ENCODE measurements at regions of chr14 and their contacts with region 1.

Region 1: GRCh38 chr14:70856851-70857495 is 47.7 kb upstream of the MAP3K9 start:
- DNase-seq: peak; percentile 92
- H3K4me3 ChIP-seq: no peak overlapping the region
- H3K27ac ChIP-seq: no peak overlapping the region
- H3K4me1 ChIP-seq: peaks cover 20% of the 10 kb centered on the region
- H3K27me3 ChIP-seq: no peaks in the 10 kb centered on the region
- CTCF ChIP-seq: no peak

Region 2: DNA sequence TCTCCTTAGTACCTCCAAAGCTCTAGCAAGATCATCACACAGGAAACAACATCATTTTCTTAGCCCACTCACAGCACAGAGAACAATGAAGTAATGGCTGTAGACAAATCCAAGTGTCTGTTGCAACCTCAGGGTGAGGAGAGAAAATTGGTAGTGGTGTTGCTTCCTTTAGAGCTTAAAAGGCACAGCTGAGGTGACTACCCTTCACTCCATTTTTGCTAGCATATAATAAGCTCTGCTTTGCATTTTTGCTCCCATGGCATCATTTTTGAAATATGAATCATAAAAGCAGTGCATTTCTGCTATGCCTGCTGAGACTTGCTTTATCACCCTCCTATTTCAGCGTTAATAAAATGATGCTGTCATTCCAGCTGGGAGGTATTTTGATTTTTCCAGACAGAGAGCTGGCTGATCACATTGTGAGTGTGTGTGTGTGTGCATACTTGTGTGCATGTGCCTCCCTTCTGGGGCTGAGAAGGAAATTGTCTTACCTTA is 31.8 kb after region 1 on chr14:
- CTCF ChIA-PET with region 1: no interaction called
- dilution Hi-C with region 1: no loop called
- in situ Hi-C with region 1: no loop called
- intact Hi-C with region 1: loop called (anchors 2 kb)
- DNase-seq: peak; percentile 89
- H3K4me3 ChIP-seq: no peak overlapping the region
- H3K27ac ChIP-seq: peak overlapping the region; percentile 38
- H3K4me1 ChIP-seq: peaks cover 43% of the 10 kb centered on the region
- H3K27me3 ChIP-seq: no peaks in the 10 kb centered on the region
- CTCF ChIP-seq: no peak